ENCODE measurements at regions of chr2 and their contacts with region 1.

Region 1: DNA sequence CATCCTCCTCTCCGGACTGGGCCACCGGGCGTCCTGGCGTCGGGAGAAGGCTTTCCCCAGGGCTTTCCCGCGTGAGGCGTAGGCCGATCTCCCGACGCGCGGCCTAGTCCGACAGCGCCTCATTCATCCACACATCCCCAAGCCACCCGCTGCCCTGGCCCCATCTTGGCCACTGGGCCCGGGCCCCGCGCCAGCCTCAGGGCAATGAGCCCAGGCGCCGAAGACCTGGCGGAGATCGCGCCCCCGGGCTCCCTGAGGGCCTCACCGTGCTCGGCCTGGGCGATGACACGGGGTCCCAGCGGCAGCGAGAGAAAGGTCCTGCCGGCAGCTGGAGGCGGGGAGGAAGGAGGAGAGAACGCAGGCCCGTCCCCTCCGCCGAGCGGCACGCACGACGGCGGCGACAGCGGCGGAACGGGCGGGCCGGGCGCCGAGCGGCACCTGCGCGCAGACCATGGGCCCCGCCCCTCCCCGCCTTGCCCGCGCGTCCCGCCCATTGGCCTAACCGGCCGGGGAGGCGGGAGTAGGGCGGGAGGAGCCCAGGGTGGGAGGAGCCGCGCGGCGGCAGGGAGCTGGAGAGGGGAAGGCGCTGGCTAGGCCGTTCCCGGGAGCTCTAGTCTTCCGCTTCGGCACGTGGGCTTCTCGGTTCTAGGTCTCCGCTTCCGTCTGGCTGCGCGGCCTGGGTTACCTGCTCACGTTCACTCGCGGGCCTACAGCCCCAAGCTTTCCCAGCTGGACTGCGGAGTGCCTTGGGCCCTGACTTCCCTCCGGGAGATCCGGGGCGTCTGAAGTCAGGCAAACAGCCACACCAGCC is at the start of gene OLA1:
- DNase-seq: peak; percentile 90
- ATAC-seq: peak; percentile 95
- H3K4me3 ChIP-seq: peak within 1 kb of the TSS; percentile 84 to 98 (median 90)
- H3K27ac ChIP-seq: peak within 1 kb of the TSS; percentile 92
- H3K4me1 ChIP-seq: peaks cover 49% of the 10 kb centered on the region
- H3K27me3 ChIP-seq: peaks cover 0 to 4% of the 10 kb centered on the region in 2 experiments; a peak in 1 of 5 replicates
- CTCF ChIP-seq: no peak
- EP300 ChIP-seq: peak in 1 of 2 experiments; percentile 7; a peak in 2 of 4 replicates
- POLR2A ChIP-seq: peak; percentile 98
- RAD21 ChIP-seq: peak; percentile 8; the same call in 1 of the 2 replicates
- total RNA-seq, gene OLA1: 241 and 333 TPM in 2 replicates

Region 2: DNA sequence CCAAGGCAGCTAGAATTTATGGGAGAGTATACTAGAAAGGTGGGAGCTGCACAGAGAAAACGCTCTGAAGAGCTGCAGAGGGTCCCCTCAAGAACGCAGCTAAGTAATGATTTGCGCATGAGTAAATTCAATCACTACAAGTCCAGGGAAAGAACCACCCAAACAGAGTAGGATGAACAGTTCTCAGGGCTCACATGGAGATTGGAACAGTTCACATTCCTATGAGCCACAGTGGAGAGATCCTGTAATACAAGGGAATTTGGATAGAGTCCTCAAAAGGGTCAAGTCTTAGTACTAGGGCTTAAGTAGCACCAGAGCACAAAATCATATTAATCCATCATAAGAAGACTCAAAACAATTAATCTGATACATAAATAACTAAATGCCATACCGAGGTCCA is 12.7 kb before region 1 on chr2:
- CTCF ChIA-PET with region 1: no interaction called
- POLR2A ChIA-PET with region 1: interaction called, 17 read pairs
- in situ Hi-C with region 1: no loop called
- intact Hi-C with region 1: loop called (anchors 2 kb)
- DNase-seq: no peak
- ATAC-seq: peak; percentile 64
- H3K4me3 ChIP-seq: no peak overlapping the region
- H3K27ac ChIP-seq: peak overlapping the region; percentile 1
- H3K4me1 ChIP-seq: peaks cover 68% of the 10 kb centered on the region
- H3K27me3 ChIP-seq: no peaks in the 10 kb centered on the region
- CTCF ChIP-seq: no peak
- EP300 ChIP-seq: no peak
- POLR2A ChIP-seq: no peak
- RAD21 ChIP-seq: no peak

Region 3: DNA sequence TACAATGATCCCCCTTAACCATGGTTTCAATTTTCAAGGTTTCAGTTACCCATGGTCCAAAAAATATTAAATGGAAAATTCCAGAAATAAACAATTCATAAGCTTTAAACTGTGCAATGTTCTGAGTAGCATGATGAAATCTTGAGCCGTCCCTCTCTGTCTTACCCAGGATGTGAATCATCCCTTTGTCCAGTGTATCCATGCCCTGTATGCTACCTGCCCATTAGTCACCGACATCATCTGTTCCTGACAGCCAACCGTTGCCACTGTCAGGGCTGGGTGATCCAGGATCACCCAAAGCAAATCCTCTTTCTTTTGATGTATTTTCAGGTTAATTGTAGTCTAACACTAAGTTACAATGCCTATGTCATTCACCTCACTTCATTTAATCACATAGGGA is 15.6 kb after region 1 on chr2:
- CTCF ChIA-PET with region 1: no interaction called
- POLR2A ChIA-PET with region 1: interaction called, 10 read pairs
- in situ Hi-C with region 1: no loop called
- intact Hi-C with region 1: no loop called
- DNase-seq: peak; percentile 76
- ATAC-seq: peak; percentile 91
- H3K4me3 ChIP-seq: no peak overlapping the region
- H3K27ac ChIP-seq: no peak overlapping the region
- H3K4me1 ChIP-seq: peaks cover 7% of the 10 kb centered on the region
- H3K27me3 ChIP-seq: peaks cover 2 to 23% of the 10 kb centered on the region in 2 experiments; a peak in 4 of 5 replicates
- CTCF ChIP-seq: no peak
- EP300 ChIP-seq: peak in 1 of 2 experiments; percentile 53; a peak in 1 of 4 replicates
- POLR2A ChIP-seq: no peak
- RAD21 ChIP-seq: no peak

Region 4: GRCh38 chr2:174334781-174335251 is 86.4 kb after region 1 on chr2 and contains the start of gene SP9:
- CTCF ChIA-PET with region 1: no interaction called
- POLR2A ChIA-PET with region 1: interaction called, 4 read pairs
- in situ Hi-C with region 1: loop called (anchors 5 kb)
- intact Hi-C with region 1: loop called (anchors 5 kb)
- DNase-seq: peak; percentile 44
- ATAC-seq: peak; percentile 55
- H3K4me3 ChIP-seq: peak within 1 kb of the TSS; percentile 35 to 72 (median 63)
- H3K27ac ChIP-seq: no peak within 1 kb of the TSS
- H3K4me1 ChIP-seq: peaks cover 52% of the 10 kb centered on the region
- H3K27me3 ChIP-seq: peaks cover 18 to 89% of the 10 kb centered on the region in 2 experiments
- CTCF ChIP-seq: no peak
- EP300 ChIP-seq: no peak
- POLR2A ChIP-seq: no peak
- RAD21 ChIP-seq: no peak
- total RNA-seq, gene SP9: not detected in 2 replicates

Region 5: DNA sequence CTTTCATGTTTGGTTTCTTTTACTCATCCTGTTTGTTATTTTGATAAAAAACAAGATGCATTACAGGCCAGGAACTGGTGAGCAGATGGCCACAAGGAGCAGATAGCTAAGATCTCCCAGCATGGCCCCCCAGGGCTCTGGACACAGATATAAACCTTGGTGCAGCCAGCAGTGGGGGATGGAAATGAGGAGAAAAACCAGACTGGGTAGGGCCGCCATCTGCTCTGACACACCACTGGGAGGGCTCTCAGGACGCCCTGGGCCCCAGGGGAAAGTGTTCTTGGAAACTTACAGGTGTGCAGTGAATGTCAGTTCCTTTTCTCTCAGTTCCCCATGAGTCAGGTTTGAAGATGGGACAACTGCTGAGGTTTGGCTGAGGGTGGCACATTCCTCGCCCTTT is 287.9 kb after region 1 on chr2:
- CTCF ChIA-PET with region 1: no interaction called
- POLR2A ChIA-PET with region 1: no interaction called
- in situ Hi-C with region 1: no loop called
- intact Hi-C with region 1: no loop called
- DNase-seq: no peak
- ATAC-seq: no peak
- H3K4me3 ChIP-seq: no peak overlapping the region
- H3K27ac ChIP-seq: no peak overlapping the region
- H3K4me1 ChIP-seq: no peaks in the 10 kb centered on the region
- H3K27me3 ChIP-seq: peaks cover 1 to 21% of the 10 kb centered on the region in 2 experiments; a peak in 3 of 5 replicates
- CTCF ChIP-seq: no peak
- EP300 ChIP-seq: no peak
- POLR2A ChIP-seq: no peak
- RAD21 ChIP-seq: no peak